GM12878 (cell line): ENCODE measurements at regions of chr14 and their contacts with region 1.

Region 1: GRCh38 chr14:65412032-65412846 is at the start of gene FUT8:
- DNase-seq: peak; percentile 80
- ATAC-seq: peak; percentile 89
- H3K4me3 ChIP-seq: peak within 1 kb of the TSS; percentile 97
- H3K27ac ChIP-seq: peak within 1 kb of the TSS; percentile 88
- H3K4me1 ChIP-seq: no peaks in the 10 kb centered on the region
- H3K27me3 ChIP-seq: no peaks in the 10 kb centered on the region
- CTCF ChIP-seq: peak; percentile 51 to 67 (median 61)
- EP300 ChIP-seq: no peak
- POLR2A ChIP-seq: peak; percentile 90
- RAD21 ChIP-seq: peak; percentile 54
- polyA plus RNA-seq, gene FUT8: 25.0 to 45.6 TPM

Region 2: DNA sequence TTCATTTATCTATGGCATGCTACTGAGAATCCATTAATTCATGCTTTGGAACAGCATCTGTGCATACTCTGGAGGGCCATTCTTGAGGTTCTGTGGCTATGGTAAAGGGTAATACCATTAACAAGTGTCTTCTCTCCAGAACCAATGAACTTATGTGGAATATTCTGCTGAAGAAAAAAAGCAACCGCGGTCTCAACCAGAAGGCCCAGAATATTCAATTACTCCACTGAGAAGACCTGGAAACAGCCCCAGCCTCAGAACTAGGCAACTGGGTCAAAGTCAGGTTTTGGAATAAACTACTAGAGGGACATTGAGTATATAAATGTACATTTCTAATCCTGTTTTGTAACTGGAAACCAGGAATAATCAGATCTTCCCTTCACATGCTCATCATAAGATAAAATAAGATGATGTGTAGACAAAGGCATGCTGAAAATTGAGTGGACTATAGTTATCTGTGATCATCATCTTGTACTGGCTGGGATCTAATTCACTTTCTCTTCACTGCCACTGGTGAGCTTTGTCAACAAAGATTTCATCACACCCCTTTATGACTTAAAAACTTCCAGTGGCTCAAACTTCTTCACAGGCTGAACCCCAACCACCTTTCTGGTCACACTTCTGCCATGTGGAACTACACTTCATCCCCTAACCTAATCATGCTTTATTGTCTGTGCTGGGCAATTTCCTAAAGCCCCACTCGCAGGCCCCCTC is 538.6 kb before region 1 on chr14:
- CTCF ChIA-PET with region 1: no interaction called
- POLR2A ChIA-PET with region 1: no interaction called
- RAD21 ChIA-PET with region 1: no interaction called
- SMC1A ChIA-PET with region 1: no interaction called
- in situ Hi-C with region 1: no loop called
- intact Hi-C with region 1: no loop called
- DNase-seq: no peak
- ATAC-seq: no peak
- H3K4me3 ChIP-seq: no peak overlapping the region
- H3K27ac ChIP-seq: no peak overlapping the region
- H3K4me1 ChIP-seq: no peaks in the 10 kb centered on the region
- H3K27me3 ChIP-seq: peaks cover 0 to 9% of the 10 kb centered on the region in 2 experiments; a peak in 3 of 4 replicates
- CTCF ChIP-seq: no peak
- EP300 ChIP-seq: no peak
- POLR2A ChIP-seq: no peak
- RAD21 ChIP-seq: no peak

Region 3: DNA sequence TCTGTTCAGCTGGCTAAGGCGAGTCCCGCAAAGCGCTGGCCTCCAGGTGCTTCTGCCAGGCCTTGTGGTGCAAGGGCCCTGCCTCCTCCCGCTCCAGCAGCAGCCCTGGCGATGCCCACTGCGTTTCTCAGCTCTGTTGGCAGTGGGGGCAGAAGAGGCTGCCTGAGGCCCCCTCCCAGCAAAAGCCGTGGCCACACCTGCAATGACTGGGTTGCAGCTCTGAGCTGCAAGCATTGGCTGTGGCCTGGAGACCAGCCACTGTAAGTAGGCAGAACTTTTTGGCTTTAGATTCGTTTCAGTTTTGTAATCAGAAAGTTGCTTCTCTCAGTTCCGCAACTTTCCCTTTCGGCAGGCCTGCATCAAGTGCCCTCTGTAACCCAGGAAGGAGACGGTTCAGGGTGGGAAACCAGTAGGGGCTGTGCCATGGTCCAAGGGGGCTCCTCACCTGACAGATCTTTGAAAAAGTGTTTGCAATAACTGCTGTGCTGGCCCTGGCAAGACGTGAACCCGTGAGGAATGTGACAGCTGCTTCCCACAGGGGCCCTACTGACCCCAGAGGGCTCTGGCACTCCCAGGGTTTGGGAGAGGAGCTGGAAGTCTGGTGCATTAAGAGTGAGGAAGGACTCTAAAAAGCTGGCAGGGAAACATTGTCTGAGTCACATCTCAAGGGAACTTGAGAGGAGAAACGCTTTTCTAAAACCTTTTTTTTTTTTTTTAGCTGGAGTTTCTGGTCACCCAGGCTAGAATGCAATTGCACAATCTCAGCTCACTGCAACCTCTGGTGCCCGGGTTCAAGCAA is 255.5 kb before region 1 on chr14:
- CTCF ChIA-PET with region 1: interaction called, 9 read pairs
- POLR2A ChIA-PET with region 1: no interaction called
- RAD21 ChIA-PET with region 1: interaction called, 9 read pairs
- SMC1A ChIA-PET with region 1: interaction called, 12 read pairs
- in situ Hi-C with region 1: no loop called
- intact Hi-C with region 1: no loop called
- DNase-seq: peak; percentile 45
- ATAC-seq: peak; percentile 92
- H3K4me3 ChIP-seq: peak overlapping the region; percentile 48; the same call in 1 of the 2 replicates
- H3K27ac ChIP-seq: peak overlapping the region; percentile 85
- H3K4me1 ChIP-seq: peaks cover 48% of the 10 kb centered on the region
- H3K27me3 ChIP-seq: no peaks in the 10 kb centered on the region
- CTCF ChIP-seq: no peak
- EP300 ChIP-seq: 0 out of 4 replicates have a peak, but pooled peaks of 1 of the 2 experiments have one; percentile 46
- POLR2A ChIP-seq: no peak
- RAD21 ChIP-seq: no peak

Region 4: GRCh38 chr14:65281991-65282895 is 130.0 kb before region 1 on chr14:
- CTCF ChIA-PET with region 1: interaction called, 199 read pairs
- POLR2A ChIA-PET with region 1: interaction called, 12 read pairs
- RAD21 ChIA-PET with region 1: interaction called, 209 read pairs
- SMC1A ChIA-PET with region 1: interaction called, 102 read pairs
- in situ Hi-C with region 1: no loop called
- intact Hi-C with region 1: loop called (anchors 1 kb)
- DNase-seq: no peak
- ATAC-seq: peak; percentile 55
- H3K4me3 ChIP-seq: peak overlapping the region; percentile 66
- H3K27ac ChIP-seq: peak overlapping the region; percentile 89
- H3K4me1 ChIP-seq: peaks cover 43% of the 10 kb centered on the region
- H3K27me3 ChIP-seq: no peaks in the 10 kb centered on the region
- CTCF ChIP-seq: no peak
- EP300 ChIP-seq: no peak
- POLR2A ChIP-seq: 0 out of 2 replicates have a peak, but pooled peaks have one; percentile 8
- RAD21 ChIP-seq: no peak

Region 5: DNA sequence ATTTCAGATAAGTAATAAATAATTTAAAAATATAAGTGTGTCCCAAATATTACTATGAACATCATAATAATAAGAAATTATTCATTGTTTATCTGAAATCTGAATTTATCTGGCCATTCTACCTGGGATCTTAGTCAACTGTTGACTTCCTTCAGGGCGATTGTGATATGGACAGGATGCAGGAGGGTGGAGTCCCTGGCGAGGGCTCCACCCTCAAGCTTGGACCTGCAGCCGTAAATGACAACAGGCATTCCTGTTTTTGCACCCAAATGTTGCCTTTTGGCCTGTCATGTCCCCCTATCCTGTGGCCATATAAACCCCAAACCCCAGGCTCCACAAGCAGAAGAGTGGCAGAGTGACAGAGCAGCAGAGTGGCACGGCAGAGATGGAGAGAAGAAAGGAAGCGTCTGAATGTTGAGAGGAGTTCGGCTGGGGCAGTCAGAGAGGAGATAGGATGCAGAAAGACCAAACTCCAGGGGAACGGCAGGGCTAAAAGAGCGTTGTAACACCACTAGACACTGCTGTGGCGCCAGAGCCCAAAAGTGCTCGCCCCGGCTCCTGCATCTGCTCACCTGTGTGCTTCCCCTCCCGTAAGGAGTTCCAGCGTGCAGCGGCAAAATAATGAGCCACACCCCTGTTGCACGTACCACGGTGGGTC is 39.1 kb before region 1 on chr14:
- CTCF ChIA-PET with region 1: interaction called, 6 read pairs
- POLR2A ChIA-PET with region 1: no interaction called
- RAD21 ChIA-PET with region 1: interaction called, 11 read pairs
- SMC1A ChIA-PET with region 1: interaction called, 4 read pairs
- in situ Hi-C with region 1: no loop called
- intact Hi-C with region 1: no loop called
- DNase-seq: no peak
- ATAC-seq: peak; percentile 37; the same call in 2 of the 3 replicates
- H3K4me3 ChIP-seq: no peak overlapping the region
- H3K27ac ChIP-seq: peak overlapping the region; percentile 22; the same call in 1 of the 2 replicates
- H3K4me1 ChIP-seq: peaks cover 13% of the 10 kb centered on the region
- H3K27me3 ChIP-seq: no peaks in the 10 kb centered on the region
- CTCF ChIP-seq: no peak
- EP300 ChIP-seq: no peak
- POLR2A ChIP-seq: no peak
- RAD21 ChIP-seq: no peak

Region 6: GRCh38 chr14:65495196-65495595 is 83.0 kb after region 1 on chr14:
- CTCF ChIA-PET with region 1: interaction called, 106 read pairs
- POLR2A ChIA-PET with region 1: no interaction called
- RAD21 ChIA-PET with region 1: interaction called, 82 read pairs
- SMC1A ChIA-PET with region 1: interaction called, 85 read pairs
- in situ Hi-C with region 1: no loop called
- intact Hi-C with region 1: no loop called
- DNase-seq: no peak
- ATAC-seq: no peak
- H3K4me3 ChIP-seq: no peak overlapping the region
- H3K27ac ChIP-seq: no peak overlapping the region
- H3K4me1 ChIP-seq: no peaks in the 10 kb centered on the region; the same call in 1 of the 2 replicates
- H3K27me3 ChIP-seq: no peaks in the 10 kb centered on the region
- CTCF ChIP-seq: no peak
- EP300 ChIP-seq: no peak
- POLR2A ChIP-seq: no peak
- RAD21 ChIP-seq: no peak

Region 7: DNA sequence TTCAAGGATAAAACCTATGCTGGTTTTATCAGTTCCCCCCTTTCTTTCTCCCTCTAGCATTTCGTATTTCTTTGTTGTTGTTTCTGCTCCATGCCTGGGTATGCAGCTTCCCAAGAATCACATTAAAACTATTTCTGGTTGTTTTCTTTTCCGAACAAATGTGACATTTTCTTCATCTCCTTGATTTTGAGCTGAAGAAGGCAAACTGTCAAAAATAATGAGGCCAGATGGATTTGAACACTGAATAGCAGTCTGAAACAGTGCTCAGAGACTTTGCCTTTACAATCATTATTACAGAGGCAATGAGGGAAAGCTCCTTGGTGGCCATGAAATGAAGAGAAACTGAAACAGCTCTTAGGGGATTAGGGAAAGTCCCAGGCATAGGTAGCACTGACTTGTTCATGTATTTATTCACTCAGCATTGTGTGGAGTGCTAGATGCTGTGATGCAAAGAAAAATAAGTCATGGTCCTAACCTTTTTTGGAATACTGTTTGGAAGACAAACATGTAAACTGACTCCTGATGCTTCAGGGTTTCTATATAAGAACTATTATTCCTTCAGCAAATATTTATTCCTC is 319.8 kb after region 1 on chr14:
- CTCF ChIA-PET with region 1: interaction called, 6 read pairs
- POLR2A ChIA-PET with region 1: no interaction called
- RAD21 ChIA-PET with region 1: interaction called, 6 read pairs
- SMC1A ChIA-PET with region 1: interaction called, 8 read pairs
- in situ Hi-C with region 1: no loop called
- intact Hi-C with region 1: loop called (anchors 10 kb)
- DNase-seq: peak; percentile 55
- ATAC-seq: peak; percentile 100
- H3K4me3 ChIP-seq: no peak overlapping the region
- H3K27ac ChIP-seq: peak overlapping the region; percentile 35; the same call in 1 of the 2 replicates
- H3K4me1 ChIP-seq: peaks cover 11% of the 10 kb centered on the region
- H3K27me3 ChIP-seq: no peaks in the 10 kb centered on the region
- CTCF ChIP-seq: no peak
- EP300 ChIP-seq: no peak
- POLR2A ChIP-seq: no peak
- RAD21 ChIP-seq: no peak

Region 8: GRCh38 chr14:66070509-66071319 is 658.5 kb after region 1 on chr14:
- CTCF ChIA-PET with region 1: interaction called, 11 read pairs
- POLR2A ChIA-PET with region 1: no interaction called
- RAD21 ChIA-PET with region 1: interaction called, 9 read pairs
- SMC1A ChIA-PET with region 1: interaction called, 10 read pairs
- in situ Hi-C with region 1: loop called (anchors 10 kb)
- intact Hi-C with region 1: loop called (anchors 5 kb)
- DNase-seq: no peak
- ATAC-seq: peak; percentile 85
- H3K4me3 ChIP-seq: no peak overlapping the region
- H3K27ac ChIP-seq: no peak overlapping the region
- H3K4me1 ChIP-seq: no peaks in the 10 kb centered on the region
- H3K27me3 ChIP-seq: no peaks in the 10 kb centered on the region; a peak in 1 of 4 replicates
- CTCF ChIP-seq: peak; percentile 72 to 87 (median 82)
- EP300 ChIP-seq: no peak
- POLR2A ChIP-seq: no peak
- RAD21 ChIP-seq: peak; percentile 84